ENCODE measurements at regions of chr18 and their contacts with region 1.

Region 1: DNA sequence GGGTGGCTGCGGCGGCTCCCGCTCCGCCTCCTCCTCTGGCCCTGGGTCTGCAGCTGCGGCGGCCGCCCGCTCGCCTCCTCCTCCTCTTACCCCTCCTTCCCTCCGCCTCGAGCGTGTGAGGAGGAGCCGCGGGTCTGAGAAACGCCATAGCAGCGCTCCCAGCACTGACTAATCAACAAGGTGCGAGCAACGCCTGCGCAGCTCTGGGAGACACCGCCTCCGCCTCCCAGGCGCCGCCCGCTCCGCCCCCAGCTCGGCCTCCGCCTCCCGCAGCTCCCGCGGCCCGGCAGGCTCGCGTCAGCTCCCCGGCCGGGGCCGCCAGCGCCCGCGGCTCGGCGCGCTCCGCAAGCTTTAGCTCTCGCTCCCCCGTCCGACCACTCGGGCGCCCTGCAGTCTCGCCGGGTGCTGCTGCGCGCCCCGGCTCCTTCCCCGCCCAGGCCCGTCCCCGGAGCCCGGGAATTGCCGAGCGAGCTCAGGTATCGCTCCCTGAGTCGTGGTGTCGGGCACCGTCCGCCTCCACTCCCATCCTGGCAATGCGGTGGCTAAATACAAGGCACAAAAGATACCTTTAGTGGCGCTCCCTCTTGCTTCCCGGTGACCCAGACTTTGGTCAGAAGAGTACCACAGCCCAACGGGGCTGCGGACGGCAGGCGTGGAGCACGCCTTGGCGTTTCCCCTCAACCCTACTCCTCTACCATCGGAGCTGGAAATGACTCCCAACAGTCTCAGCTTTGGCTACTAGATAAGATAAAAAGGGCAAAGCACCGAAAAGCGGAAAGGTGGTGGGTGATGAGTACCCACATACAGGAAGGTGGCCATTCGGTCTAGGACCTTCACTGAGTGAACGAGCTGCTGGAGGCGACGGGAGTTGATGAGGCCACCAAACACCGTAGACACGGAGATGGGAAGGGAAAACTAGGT is at the start of gene GAREM1:
- DNase-seq: peak; percentile 88
- ATAC-seq: peak; percentile 99
- H3K4me3 Mint-ChIP-seq: peak within 1 kb of the TSS; percentile 72
- H3K27ac Mint-ChIP-seq: no peak within 1 kb of the TSS
- H3K4me1 Mint-ChIP-seq: peaks cover 11% of the 10 kb centered on the region
- H3K27me3 Mint-ChIP-seq: peaks cover 57% of the 10 kb centered on the region
- total RNA-seq, gene GAREM1: not detected

Region 2: GRCh38 chr18:32158108-32158624 is 312.8 kb before region 1 on chr18:
- CTCF ChIA-PET with region 1: interaction called, 23 read pairs
- POLR2A ChIA-PET with region 1: no interaction called
- DNase-seq: peak; percentile 82
- ATAC-seq: peak; percentile 97
- H3K4me3 Mint-ChIP-seq: peak overlapping the region; percentile 42
- H3K27ac Mint-ChIP-seq: peak overlapping the region; percentile 26
- H3K4me1 Mint-ChIP-seq: peaks cover 11% of the 10 kb centered on the region
- H3K27me3 Mint-ChIP-seq: peaks cover 5% of the 10 kb centered on the region

Region 3: DNA sequence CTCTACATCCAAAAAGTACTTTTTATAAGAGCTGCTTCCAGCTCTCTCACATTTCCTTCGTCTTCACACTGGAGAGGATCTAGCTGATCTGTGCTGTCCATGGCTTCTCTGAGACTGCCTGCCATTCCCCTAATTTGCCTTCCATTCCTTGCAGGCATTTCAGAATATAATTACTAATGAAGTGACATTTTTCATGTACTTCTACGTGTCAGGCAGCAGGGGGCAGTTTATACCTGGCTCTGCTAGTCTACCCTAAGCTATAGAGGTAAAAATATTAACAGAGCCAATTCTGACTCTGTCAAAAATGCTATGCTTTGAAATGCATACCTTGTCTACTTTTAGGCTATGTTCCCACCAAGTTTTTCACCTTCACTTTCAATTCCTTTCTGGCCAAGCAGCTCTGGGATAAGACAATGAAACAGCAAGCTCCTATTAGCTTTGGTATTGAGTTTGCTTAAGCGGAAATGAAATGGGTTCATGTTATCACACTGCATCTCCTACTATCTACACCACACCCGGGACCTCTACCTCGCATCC is 199.2 kb before region 1 on chr18:
- CTCF ChIA-PET with region 1: interaction called, 10 read pairs
- POLR2A ChIA-PET with region 1: no interaction called
- DNase-seq: peak; percentile 24
- ATAC-seq: no peak
- H3K4me3 Mint-ChIP-seq: no peak overlapping the region
- H3K27ac Mint-ChIP-seq: no peak overlapping the region
- H3K4me1 Mint-ChIP-seq: no peaks in the 10 kb centered on the region
- H3K27me3 Mint-ChIP-seq: peaks cover 8% of the 10 kb centered on the region

Region 4: DNA sequence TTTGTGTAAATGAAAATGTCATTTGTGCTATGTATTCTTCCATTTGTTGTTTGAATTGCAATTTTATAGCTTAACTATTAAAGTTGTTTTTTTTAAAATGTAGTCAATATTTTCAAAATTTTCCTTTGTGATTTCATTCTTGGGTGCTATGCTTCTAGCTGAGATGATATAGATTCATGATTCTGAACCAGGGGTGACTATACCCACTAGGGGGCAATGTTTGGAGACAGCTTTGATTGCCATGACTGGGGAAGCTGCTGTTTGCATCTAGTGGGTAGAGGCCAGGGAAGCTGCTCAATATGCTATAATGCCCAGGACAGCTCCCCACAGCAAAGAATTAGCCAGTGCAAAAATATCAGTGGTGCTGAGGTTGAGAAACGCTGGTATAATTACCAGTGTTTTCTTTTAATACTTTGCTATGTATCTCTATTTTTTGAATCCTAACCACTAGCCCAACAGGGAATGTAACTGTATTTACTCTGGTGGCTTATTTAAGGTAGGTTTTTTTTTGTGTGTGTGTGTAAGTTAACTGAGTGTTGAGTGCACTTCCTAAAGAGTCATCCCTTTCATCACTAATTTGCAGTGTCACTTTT is 181.4 kb before region 1 on chr18:
- CTCF ChIA-PET with region 1: interaction called, 18 read pairs
- POLR2A ChIA-PET with region 1: no interaction called
- DNase-seq: peak; percentile 48
- ATAC-seq: peak; percentile 55
- H3K4me3 Mint-ChIP-seq: no peak overlapping the region
- H3K27ac Mint-ChIP-seq: no peak overlapping the region
- H3K4me1 Mint-ChIP-seq: no peaks in the 10 kb centered on the region
- H3K27me3 Mint-ChIP-seq: peaks cover 3% of the 10 kb centered on the region

Region 5: DNA sequence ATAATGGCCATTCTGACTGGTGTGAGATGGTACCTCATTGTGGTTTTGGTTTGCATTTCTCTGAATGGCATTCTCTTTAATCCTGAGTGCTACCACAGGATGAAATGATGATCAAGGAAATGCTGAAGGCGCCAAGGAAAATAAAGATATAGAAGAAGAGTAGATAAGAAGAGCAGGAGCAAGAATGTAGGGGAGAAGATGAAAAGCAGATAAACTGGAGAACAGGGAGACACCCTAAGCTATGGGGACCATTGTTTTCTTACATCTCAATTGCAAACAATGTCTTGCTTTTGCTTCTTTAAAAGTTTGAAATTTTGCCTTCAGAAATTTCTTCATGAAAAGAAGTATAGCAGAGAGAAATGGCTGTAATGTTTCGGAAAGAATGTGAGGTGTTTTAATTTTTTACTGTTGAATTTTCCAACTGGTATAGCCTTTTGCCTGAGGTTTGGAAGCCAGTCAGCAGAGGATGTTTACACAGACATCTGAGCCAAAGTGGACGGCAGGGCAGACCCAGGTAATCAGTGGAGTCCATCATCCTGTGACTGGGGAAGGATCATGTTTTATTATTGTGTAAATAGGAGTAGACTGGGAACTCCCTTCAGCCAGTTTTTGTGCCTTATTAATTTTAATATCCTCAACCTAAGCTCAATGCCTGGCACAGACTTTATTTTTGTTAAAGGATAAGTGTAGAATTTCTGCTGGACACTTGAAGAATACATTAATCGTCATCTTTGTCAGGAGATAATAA is 141.5 kb after region 1 on chr18:
- CTCF ChIA-PET with region 1: no interaction called
- POLR2A ChIA-PET with region 1: no interaction called
- DNase-seq: no peak
- ATAC-seq: no peak
- H3K4me3 Mint-ChIP-seq: no peak overlapping the region
- H3K27ac Mint-ChIP-seq: no peak overlapping the region
- H3K4me1 Mint-ChIP-seq: no peaks in the 10 kb centered on the region
- H3K27me3 Mint-ChIP-seq: no peaks in the 10 kb centered on the region